ENCODE measurements at regions of chr12 and their contacts with region 1.

Region 1: GRCh38 chr12:56688129-56688845 is at the start of gene PTGES3:
- DNase-seq: peak; percentile 99
- ATAC-seq: peak; percentile 85
- H3K4me3 Mint-ChIP-seq: peak within 1 kb of the TSS; percentile 99
- H3K27ac Mint-ChIP-seq: peak within 1 kb of the TSS; percentile 100
- H3K4me1 Mint-ChIP-seq: peaks cover 11% of the 10 kb centered on the region
- H3K27me3 Mint-ChIP-seq: no peaks in the 10 kb centered on the region
- total RNA-seq, gene PTGES3: 284 to 386 TPM

Region 2: GRCh38 chr12:55817346-55818139 is 870.7 kb before region 1 on chr12 and contains the starts of genes ORMDL2 and SARNP:
- CTCF ChIA-PET with region 1: no interaction called
- POLR2A ChIA-PET with region 1: no interaction called
- intact Hi-C with region 1: loop called in 1 of 2 experiments (anchors 5 kb)
- DNase-seq: peak; percentile 97
- ATAC-seq: peak; percentile 98
- H3K4me3 Mint-ChIP-seq: no peak within 1 kb of the TSS
- H3K27ac Mint-ChIP-seq: no peak within 1 kb of the TSS
- H3K4me1 Mint-ChIP-seq: peaks cover 49% of the 10 kb centered on the region
- H3K27me3 Mint-ChIP-seq: no peaks in the 10 kb centered on the region
- total RNA-seq, gene ORMDL2: 29.4 to 35.6 TPM
- total RNA-seq, gene SARNP: 111 to 114 TPM

Region 3: DNA sequence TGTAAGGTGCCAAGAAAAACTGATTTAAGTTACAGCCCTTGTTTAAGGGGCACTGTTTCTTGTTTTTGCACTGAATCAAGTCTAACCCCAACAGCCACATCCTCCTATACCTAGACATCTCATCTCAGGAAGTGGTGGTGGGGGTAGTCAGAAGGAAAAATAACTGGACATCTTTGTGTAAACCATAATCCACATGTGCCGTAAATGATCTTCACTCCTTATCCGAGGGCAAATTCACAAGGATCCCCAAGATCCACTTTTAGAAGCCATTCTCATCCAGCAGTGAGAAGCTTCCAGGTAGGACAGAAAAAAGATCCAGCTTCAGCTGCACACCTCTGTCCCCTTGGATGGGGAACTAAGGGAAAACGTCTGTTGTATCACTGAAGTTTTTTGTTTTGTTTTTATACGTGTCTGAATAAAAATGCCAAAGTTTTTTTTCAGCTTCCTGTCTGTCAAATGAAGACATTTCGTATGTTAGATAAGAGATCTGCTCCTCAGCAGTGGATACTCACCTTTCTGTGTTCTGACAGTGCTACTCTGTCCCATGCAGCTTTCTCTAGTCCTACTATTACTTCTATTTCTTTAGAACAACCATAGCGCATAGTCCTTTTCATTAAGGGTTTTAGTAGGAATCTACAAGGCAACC is 585.1 kb before region 1 on chr12:
- CTCF ChIA-PET with region 1: no interaction called
- POLR2A ChIA-PET with region 1: no interaction called
- intact Hi-C with region 1: no loop called
- DNase-seq: no peak
- ATAC-seq: no peak
- H3K4me3 Mint-ChIP-seq: peak overlapping the region; percentile 100
- H3K27ac Mint-ChIP-seq: peak overlapping the region; percentile 100
- H3K4me1 Mint-ChIP-seq: peaks cover 43% of the 10 kb centered on the region
- H3K27me3 Mint-ChIP-seq: no peaks in the 10 kb centered on the region

Region 4: GRCh38 chr12:56315622-56316473 is 372.4 kb before region 1 on chr12 and contains the start of gene CNPY2:
- CTCF ChIA-PET with region 1: no interaction called
- POLR2A ChIA-PET with region 1: no interaction called
- intact Hi-C with region 1: loop called in 1 of 2 experiments (anchors 5 kb)
- DNase-seq: peak; percentile 95
- ATAC-seq: peak; percentile 93
- H3K4me3 Mint-ChIP-seq: peak within 1 kb of the TSS; percentile 97
- H3K27ac Mint-ChIP-seq: peak within 1 kb of the TSS; percentile 95
- H3K4me1 Mint-ChIP-seq: peaks cover 18% of the 10 kb centered on the region
- H3K27me3 Mint-ChIP-seq: no peaks in the 10 kb centered on the region
- total RNA-seq, gene CNPY2: 77.4 to 82.6 TPM

Region 5: GRCh38 chr12:56630160-56630632 is 58.1 kb before region 1 on chr12 and contains the start of gene BAZ2A:
- CTCF ChIA-PET with region 1: interaction called, 15 read pairs
- POLR2A ChIA-PET with region 1: interaction called, 14 read pairs
- intact Hi-C with region 1: no loop called
- DNase-seq: peak; percentile 94
- ATAC-seq: peak; percentile 69
- H3K4me3 Mint-ChIP-seq: peak within 1 kb of the TSS; percentile 96
- H3K27ac Mint-ChIP-seq: peak within 1 kb of the TSS; percentile 93
- H3K4me1 Mint-ChIP-seq: peaks cover 75% of the 10 kb centered on the region
- H3K27me3 Mint-ChIP-seq: no peaks in the 10 kb centered on the region
- total RNA-seq, gene BAZ2A: 79.4 to 129 TPM

Region 6: DNA sequence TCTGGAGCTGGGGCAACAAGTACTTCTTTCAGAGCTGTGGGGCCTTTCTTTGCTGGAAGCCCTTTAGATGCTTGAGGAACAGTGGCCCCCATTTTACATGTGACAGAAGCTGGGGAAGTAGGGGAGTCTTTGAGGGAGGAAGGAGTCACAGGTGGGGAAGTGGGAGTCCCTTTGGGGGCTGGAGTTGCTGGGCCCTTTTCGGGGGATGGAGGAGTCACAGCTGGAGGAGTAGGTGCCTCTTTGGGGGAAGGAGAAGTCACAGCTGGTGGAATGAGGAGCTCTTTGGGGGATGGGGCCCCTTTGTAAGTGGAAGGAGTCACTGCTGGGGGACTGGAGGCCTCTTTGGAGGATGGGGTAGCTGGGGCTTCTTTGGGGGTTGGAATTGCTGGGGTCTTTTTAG is 28.2 kb after region 1 on chr12:
- CTCF ChIA-PET with region 1: interaction called, 5 read pairs
- POLR2A ChIA-PET with region 1: interaction called, 12 read pairs
- intact Hi-C with region 1: no loop called
- DNase-seq: no peak
- ATAC-seq: no peak
- H3K4me3 Mint-ChIP-seq: no peak overlapping the region
- H3K27ac Mint-ChIP-seq: peak overlapping the region; percentile 84
- H3K4me1 Mint-ChIP-seq: peaks cover 52% of the 10 kb centered on the region
- H3K27me3 Mint-ChIP-seq: no peaks in the 10 kb centered on the region

Region 7: DNA sequence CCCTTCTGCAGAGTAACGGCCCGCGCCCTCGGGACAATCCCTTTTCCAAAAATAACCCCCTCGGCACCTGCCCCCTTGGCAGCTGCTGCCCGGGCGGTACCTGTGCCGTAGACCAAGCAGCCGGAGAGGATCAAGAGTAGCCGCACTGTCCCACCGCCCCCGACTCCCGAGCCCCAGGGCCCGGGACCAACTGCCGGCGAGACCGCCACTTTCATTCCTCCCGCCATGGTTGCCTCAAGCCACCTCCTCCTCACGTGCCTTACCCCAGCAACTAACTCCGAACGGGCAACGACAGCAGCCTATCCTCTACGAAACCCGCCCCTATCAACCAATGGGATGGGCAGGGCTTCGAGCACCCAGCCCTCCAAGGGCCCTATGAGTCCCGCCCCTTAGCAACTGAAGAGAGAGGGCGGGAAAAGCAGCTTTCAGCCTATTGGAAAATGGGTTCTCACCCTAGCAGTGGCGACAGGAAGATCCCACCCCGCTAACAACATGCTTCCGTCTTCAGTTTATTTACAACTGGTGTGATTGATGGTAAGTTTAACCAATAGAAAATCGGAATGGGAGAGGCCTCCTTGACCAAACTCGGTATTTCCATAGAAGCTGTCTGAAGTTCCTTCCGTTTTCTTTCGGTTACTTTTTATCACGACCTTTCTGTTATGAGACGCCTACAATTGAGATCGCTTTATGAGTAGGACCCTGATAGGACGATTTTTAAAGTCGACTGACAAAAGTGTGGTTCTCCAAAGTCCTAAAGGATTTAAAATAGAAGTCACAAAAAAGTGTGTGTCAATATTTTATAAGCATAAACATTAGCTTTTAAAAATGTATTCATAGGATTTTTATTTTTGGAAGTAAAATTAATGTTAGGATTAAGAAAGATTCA is 390.5 kb after region 1 on chr12 and contains the start of gene NEMP1:
- CTCF ChIA-PET with region 1: interaction called, 4 read pairs
- POLR2A ChIA-PET with region 1: interaction called, 6 read pairs
- intact Hi-C with region 1: loop called in 1 of 2 experiments (anchors 1 kb)
- DNase-seq: peak; percentile 97
- ATAC-seq: peak; percentile 95
- H3K4me3 Mint-ChIP-seq: peak within 1 kb of the TSS; percentile 97
- H3K27ac Mint-ChIP-seq: peak within 1 kb of the TSS; percentile 94
- H3K4me1 Mint-ChIP-seq: peaks cover 29% of the 10 kb centered on the region
- H3K27me3 Mint-ChIP-seq: no peaks in the 10 kb centered on the region
- total RNA-seq, gene NEMP1: 79.0 to 81.1 TPM

Measured in activated CD4-positive, alpha-beta T cell treated with anti-CD3 and anti-CD28 coated beads for 36 hours (primary cell).